ENCODE measurements at regions of chrX and their contacts with region 1.

Region 1: GRCh38 chrX:132615391-132616131 is 126.7 kb upstream of the MBNL3 start:
- DNase-seq: no peak
- H3K4me3 ChIP-seq: no peak overlapping the region
- CTCF ChIP-seq: peak; percentile 38

Region 2: DNA sequence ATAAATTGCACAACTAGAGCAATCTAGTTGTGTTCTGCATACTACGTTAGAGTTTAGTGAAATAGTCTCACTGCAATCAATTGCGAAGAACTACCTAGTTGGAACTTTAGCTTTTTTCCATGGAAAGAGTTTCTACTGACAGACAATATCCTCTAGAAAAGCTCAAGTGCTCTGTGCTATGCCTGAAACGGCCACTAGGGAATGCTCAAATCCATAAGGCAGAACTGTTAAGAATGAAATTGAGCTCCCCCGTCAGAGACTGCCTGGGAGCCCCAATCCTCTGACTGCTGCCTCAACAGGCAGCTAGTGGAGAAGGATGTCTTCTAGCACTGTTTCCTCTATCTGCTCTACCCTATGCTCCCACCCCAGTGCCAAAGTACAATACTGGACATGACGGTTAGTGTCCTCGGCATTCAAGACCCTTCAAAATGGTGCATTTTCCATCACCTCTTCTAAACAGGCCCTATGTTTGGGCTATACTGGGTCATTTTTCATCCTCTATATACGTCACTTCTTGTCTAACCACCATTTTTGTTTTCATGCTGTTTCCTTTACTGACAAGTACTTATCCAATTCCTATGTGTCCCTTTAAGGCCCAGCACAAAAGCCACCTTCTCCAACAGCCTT is 523.0 kb before region 1 on chrX:
- CTCF ChIA-PET with region 1: interaction called, 12 read pairs
- POLR2A ChIA-PET with region 1: no interaction called
- DNase-seq: no peak
- H3K4me3 ChIP-seq: no peak overlapping the region
- CTCF ChIP-seq: peak; percentile 56

Region 3: GRCh38 chrX:132226169-132226568 is 389.4 kb before region 1 on chrX:
- CTCF ChIA-PET with region 1: interaction called, 50 read pairs
- POLR2A ChIA-PET with region 1: no interaction called
- DNase-seq: no peak
- H3K4me3 ChIP-seq: no peak overlapping the region
- CTCF ChIP-seq: no peak

Region 4: DNA sequence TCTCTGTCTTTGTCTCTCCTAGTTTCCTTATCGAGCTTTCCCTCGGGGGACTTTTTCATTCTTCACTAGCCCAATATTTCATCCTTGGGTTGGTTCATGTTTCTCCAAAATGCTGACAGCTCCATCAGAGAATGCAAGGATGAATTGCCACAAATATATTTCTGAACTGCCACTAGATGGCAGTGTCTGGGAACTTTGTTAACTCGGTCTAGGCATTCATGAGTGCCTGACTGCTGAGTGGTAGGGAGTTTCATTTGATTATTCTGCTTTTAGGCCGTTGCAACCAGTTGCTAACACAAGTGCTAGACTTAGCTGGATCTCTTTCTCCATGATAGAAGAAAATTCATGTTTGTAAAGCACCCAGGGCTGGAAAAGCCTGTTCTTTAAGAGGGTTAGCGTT is 322.8 kb before region 1 on chrX:
- CTCF ChIA-PET with region 1: interaction called, 51 read pairs
- POLR2A ChIA-PET with region 1: no interaction called
- DNase-seq: peak; percentile 12
- H3K4me3 ChIP-seq: no peak overlapping the region
- CTCF ChIP-seq: peak; percentile 33

Region 5: DNA sequence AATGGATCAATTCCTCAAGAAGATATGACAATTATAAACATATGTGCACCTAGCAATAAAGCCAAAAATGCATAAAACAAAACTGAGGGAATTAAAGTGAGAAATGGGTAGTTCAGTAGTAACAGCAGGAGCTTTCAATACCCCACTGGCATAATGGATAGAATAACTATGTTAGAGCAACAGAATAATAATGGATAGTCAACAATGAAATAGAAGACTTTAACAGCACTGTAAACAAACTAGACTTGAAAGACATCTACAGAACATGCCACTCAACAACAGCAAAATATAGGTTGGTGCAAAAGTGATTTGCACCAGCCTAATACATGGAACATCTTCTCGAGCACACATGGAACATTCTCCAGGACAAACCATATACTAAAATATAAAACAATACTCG is 106.7 kb before region 1 on chrX:
- CTCF ChIA-PET with region 1: no interaction called
- POLR2A ChIA-PET with region 1: no interaction called
- DNase-seq: no peak
- H3K4me3 ChIP-seq: no peak overlapping the region
- CTCF ChIP-seq: no peak

Region 6: DNA sequence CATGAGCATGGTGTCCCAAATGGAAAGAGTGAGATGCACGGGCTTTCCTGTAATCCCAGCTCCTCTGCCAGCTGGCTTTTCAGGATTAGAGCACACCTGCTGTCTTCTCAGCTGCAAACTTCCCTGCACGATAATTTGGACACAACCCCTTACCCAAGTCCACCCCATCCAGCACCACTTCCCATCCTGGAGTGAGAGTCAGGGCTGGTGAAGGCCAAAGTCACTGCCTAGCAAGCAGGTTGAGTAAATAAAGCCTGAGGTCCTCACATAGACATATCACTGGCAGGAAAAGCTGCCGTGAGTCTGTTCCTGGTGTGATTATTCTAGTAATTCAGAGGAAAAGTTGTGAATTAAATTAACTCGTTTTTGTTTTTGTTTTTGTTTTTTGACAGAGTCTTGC is 12.9 kb before region 1 on chrX:
- CTCF ChIA-PET with region 1: interaction called, 14 read pairs
- POLR2A ChIA-PET with region 1: no interaction called
- DNase-seq: no peak
- H3K4me3 ChIP-seq: no peak overlapping the region
- CTCF ChIP-seq: no peak

Region 7: DNA sequence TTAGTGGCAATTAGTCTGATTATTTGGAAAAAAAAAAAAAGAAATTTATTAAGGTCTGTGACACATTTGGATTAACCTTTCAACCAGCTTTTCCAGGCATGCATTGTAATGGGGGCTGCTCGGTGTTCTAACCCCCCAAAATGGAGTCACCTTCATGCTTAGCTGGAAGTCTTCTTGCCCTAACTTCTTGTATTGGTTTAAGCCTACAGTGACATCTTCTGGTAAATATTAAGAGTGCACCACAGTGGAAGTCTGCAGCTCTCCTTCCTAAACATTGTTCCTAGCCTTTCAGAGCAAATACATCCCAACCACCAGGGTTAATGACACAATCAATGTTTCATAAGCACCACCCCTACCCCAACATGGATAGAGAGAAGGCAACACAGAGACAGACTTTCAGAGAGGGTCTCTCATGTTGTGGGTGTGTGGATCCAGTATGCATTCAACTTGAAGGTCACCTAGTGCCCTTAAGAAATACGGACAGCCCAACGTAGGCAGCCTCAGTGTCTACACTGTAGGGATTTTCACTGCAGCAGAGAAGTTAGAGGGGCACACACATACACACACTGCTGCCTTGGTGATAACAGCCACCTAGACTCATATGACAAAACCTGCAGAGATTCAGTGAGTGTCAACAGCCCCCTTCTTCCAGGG is 16.1 kb after region 1 on chrX:
- CTCF ChIA-PET with region 1: interaction called, 21 read pairs
- POLR2A ChIA-PET with region 1: no interaction called
- DNase-seq: no peak
- H3K4me3 ChIP-seq: no peak overlapping the region
- CTCF ChIP-seq: peak; percentile 17

Measured in AG04449 (cell line).